Heart left ventricle (tissue), 16 donors: ENCODE measurements at regions of chr1 and their contacts with region 1.

Region 1: DNA sequence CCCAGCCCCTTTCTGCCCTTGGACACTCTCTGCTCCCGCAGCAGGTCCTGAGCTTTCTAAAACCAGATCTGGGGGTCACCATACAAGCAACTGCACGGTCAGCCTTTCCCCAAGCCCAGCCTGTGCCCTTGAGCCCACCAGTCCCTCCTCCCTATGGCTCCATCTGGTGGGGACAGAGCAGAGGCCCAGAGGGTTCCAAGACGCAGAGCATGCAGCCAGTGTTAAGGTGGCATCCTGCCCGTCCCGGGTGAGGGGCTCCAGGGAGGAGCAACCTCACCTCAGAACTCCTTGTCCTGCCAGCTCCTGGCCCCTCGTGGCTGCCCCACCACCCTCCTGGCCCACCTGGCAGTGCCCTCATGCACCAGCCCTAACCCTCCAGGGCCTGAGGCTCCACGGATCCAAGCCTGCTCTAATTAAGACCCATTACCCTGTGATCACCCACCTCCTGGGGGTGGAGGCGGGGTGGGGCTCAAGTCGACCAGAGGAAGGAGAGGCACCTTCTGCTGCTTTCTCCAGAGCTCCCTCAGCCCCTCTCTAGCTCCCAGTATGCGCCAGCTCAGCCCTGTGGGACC is 8.5 kb downstream of the CHD5 start:
- DNase-seq: peak in 1 of 5 donors; percentile 35
- ATAC-seq: peak in 2 of 4 donors; percentile 21 to 45
- H3K4me3 ChIP-seq: no peak overlapping the region
- H3K27ac ChIP-seq: no peak overlapping the region
- H3K4me1 ChIP-seq: no peaks in the 10 kb centered on the region
- H3K27me3 ChIP-seq: peaks cover 0 to 35% (median 4%) of the 10 kb centered on the region in 9 donors
- CTCF ChIP-seq: peak in 4 of 12 donors; percentile 20 to 33 (median 24)
- POLR2A ChIP-seq: no peak

Region 2: GRCh38 chr1:6041432-6042062 is 130.1 kb before region 1 on chr1:
- intact Hi-C with region 1: loop called in 2 of 10 experiments (anchors 5 to 10 kb)
- DNase-seq: no peak
- ATAC-seq: peak in 2 of 4 donors; percentile 44 to 50
- H3K4me3 ChIP-seq: no peak overlapping the region
- H3K27ac ChIP-seq: no peak overlapping the region
- H3K4me1 ChIP-seq: peaks cover 0 to 6% (median 0%) of the 10 kb centered on the region in 12 donors
- H3K27me3 ChIP-seq: no peaks in the 10 kb centered on the region
- CTCF ChIP-seq: peak in 10 of 12 donors; percentile 27 to 54 (median 49)
- POLR2A ChIP-seq: no peak

Region 3: DNA sequence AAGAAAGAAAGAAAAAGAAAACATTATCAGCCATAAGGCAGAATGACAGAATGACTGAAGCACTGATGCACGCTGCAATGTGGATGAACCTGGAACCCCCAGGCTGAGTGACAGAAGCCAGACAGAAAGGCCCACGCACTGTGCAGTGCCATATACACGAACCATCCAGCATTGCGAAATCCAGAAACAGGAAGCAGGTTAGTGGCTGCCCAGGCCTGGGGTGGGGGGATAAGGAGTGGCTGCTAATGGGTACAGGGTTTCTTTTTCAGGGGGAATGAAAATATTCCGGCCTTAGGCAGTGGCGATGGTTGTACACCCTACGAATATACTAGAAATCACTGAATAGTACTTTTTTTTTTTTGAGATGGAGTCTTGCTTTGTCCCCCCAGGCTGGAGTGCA is 48.6 kb before region 1 on chr1:
- intact Hi-C with region 1: loop called in 1 of 10 experiments (anchors 5 kb)
- DNase-seq: peak in 2 of 5 donors; percentile 17 to 21
- ATAC-seq: no peak
- H3K4me3 ChIP-seq: no peak overlapping the region
- H3K27ac ChIP-seq: no peak overlapping the region
- H3K4me1 ChIP-seq: peaks cover 0 to 12% (median 0%) of the 10 kb centered on the region in 12 donors
- H3K27me3 ChIP-seq: peaks cover 0 to 26% (median 0%) of the 10 kb centered on the region in 9 donors
- CTCF ChIP-seq: no peak
- POLR2A ChIP-seq: no peak

Region 4: GRCh38 chr1:6141592-6141991 is 30.0 kb before region 1 on chr1:
- intact Hi-C with region 1: no loop called
- DNase-seq: no peak
- ATAC-seq: no peak
- H3K4me3 ChIP-seq: no peak overlapping the region
- H3K27ac ChIP-seq: no peak overlapping the region
- H3K4me1 ChIP-seq: no peaks in the 10 kb centered on the region
- H3K27me3 ChIP-seq: peaks cover 0 to 10% (median 4%) of the 10 kb centered on the region in 9 donors
- CTCF ChIP-seq: no peak
- POLR2A ChIP-seq: no peak

Region 5: DNA sequence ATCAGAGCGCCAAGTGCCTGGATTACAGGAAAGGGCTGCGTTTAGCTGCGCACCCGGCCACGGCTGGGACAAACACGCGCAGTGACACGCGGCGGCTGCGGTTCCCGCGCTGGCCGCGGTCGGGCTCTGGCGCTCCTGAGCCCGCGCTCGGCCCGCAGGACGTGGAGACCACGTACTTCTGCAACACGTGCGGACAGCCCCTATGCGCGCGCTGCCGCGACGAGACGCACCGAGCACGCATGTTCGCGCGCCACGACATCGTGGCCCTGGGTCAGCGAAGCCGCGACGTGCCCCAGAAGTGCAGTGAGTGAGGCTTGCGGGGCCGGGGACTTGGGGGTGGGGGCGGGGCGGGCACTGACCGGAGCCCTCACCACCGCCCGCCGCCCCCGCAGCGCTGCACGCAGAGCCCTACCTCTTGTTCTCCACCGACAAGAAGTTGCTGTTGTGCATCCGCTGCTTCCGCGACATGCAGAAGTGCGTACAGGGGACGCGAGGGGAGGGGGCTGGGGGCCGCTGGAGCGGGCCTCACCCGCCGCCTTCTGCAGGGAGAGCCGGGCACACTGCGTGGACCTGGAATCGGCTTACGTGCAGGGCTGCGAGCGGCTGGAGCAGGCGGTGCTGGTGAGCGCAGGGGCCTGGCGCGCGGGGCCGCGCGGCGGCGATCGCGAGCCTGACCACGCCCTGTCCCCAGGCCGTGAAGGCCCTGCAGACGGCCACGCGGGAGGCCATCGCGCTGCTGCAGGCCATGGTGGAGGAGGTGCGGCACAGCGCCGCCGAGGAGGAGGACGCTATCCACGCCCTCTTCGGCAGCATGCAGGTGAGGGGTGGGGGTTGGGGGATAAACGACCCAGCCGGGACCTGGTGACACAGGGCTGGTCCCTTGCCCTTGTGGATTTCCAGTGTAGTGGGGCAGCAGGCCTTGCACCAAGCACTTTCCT is 37.4 kb after region 1 on chr1:
- intact Hi-C with region 1: no loop called
- DNase-seq: peak in 4 of 5 donors; percentile 49 to 77 (median 64)
- ATAC-seq: peak in 2 of 4 donors; percentile 17 to 44
- H3K4me3 ChIP-seq: peak overlapping the region; percentile 4 to 59 (median 48)
- H3K27ac ChIP-seq: peak overlapping the region in 7 of 12 donors; percentile 9 to 89 (median 45)
- H3K4me1 ChIP-seq: peaks cover 0 to 57% (median 44%) of the 10 kb centered on the region in 12 donors
- H3K27me3 ChIP-seq: peaks cover 0 to 34% (median 0%) of the 10 kb centered on the region in 9 donors
- CTCF ChIP-seq: peak in 11 of 12 donors; percentile 16 to 61 (median 49)
- POLR2A ChIP-seq: no peak

Region 6: GRCh38 chr1:6222636-6223035 is 51.0 kb after region 1 on chr1:
- intact Hi-C with region 1: no loop called
- DNase-seq: peak in 4 of 5 donors; percentile 82 to 91 (median 86)
- ATAC-seq: peak; percentile 69 to 80 (median 75)
- H3K4me3 ChIP-seq: no peak overlapping the region
- H3K27ac ChIP-seq: peak overlapping the region; percentile 7 to 80 (median 70)
- H3K4me1 ChIP-seq: peaks cover 0 to 49% (median 33%) of the 10 kb centered on the region in 12 donors
- H3K27me3 ChIP-seq: no peaks in the 10 kb centered on the region
- CTCF ChIP-seq: no peak
- POLR2A ChIP-seq: no peak

Region 7: DNA sequence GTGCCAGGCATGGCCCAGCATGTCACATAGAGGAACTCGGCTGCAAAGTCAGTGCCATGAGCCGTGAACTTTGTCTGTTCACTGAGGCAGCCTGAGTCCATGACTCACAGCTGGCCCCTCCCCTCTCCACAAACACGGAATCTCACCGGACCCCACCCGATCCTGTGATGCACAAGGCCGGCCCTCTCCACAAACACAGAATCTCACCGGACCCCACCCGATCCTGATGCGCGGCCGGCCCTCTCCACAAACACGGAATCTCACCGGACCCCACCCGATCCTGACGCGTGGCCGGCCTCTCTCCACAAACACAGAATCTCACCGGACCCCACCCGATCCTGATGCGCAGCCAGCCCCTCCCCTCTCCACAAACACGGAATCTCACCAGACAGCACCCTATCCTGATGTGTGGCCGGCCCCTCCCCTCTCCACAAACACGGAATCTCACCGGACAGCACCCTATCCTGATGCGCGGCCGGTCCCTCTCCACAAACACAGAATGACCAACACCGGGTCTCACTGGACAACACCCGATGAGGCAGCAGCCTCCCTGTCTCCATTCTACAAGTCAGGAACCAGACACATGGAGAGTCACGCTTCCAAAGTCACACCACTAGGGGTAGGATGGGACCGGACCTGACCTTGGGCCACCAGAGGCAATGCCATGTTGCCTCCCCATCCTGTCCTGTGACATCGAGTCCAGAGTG is 128.9 kb after region 1 on chr1:
- intact Hi-C with region 1: no loop called
- DNase-seq: no peak
- ATAC-seq: no peak
- H3K4me3 ChIP-seq: no peak overlapping the region
- H3K27ac ChIP-seq: no peak overlapping the region
- H3K4me1 ChIP-seq: no peaks in the 10 kb centered on the region
- H3K27me3 ChIP-seq: no peaks in the 10 kb centered on the region
- CTCF ChIP-seq: no peak
- POLR2A ChIP-seq: no peak